Activated B cell treated with CpG ODN at 0.5 μM for 24 hours (primary cell): ENCODE measurements at regions of chr3 and their contacts with region 1.

Region 1: GRCh38 chr3:140941434-140942220 is at the start of gene SLC25A36:
- DNase-seq: peak; percentile 86
- ATAC-seq: peak; percentile 96
- H3K4me3 Mint-ChIP-seq: peak within 1 kb of the TSS; percentile 96
- H3K27ac Mint-ChIP-seq: peak within 1 kb of the TSS; percentile 96
- H3K4me1 Mint-ChIP-seq: peaks cover 37% of the 10 kb centered on the region
- H3K27me3 Mint-ChIP-seq: no peaks in the 10 kb centered on the region
- CTCF ChIP-seq: no peak
- total RNA-seq, gene SLC25A36: 40.4 and 45.7 TPM in 2 replicates

Region 2: GRCh38 chr3:139343895-139344856 is 1597.5 kb before region 1 on chr3 and contains the start of gene MRPS22:
- CTCF ChIA-PET with region 1: no interaction called
- POLR2A ChIA-PET with region 1: no interaction called
- intact Hi-C with region 1: loop called (anchors 5 kb)
- DNase-seq: peak; percentile 64
- ATAC-seq: peak; percentile 99
- H3K4me3 Mint-ChIP-seq: no peak within 1 kb of the TSS
- H3K27ac Mint-ChIP-seq: peak within 1 kb of the TSS; percentile 4
- H3K4me1 Mint-ChIP-seq: peaks cover 3% of the 10 kb centered on the region
- H3K27me3 Mint-ChIP-seq: peaks cover 16% of the 10 kb centered on the region
- CTCF ChIP-seq: no peak
- total RNA-seq, gene MRPS22: 37.0 and 44.7 TPM in 2 replicates

Region 3: DNA sequence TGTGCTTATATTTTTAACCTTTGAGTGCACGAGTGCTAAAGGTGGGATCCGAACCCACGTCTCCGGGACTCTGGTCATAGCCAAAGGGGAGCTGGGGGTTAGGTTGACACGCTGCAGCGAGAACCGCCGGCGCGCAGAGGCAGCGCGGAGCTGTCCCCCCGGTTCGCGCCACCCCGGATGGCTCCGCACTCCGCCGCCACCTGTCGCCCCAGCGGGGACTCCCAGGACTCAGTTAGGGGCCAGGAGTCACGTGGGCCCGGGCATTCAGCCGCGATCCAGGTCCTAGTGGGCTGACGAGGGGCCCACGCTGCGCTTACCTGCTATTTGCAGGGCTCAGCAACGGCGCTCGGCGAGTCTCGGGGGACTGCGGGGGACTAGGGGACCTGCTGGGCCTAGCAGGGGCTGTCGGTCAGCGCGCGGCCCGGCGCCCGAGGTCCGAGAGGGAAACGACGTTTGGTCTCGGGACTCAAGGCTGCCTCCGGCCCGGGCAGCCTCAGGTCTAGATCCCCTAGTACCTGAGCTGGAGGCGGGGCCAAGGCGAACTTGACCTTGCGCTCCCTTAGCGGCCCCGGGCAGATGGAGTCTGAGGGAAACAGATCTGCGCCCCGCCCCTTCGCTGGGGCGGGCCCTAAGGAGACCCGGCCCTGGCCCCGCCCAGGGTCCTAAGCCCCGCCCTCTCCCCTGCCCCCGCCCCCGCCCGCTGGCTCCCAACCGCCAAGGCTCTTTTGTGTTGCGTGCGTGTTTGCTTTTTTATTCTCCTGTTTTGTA is 1264.1 kb before region 1 on chr3 and contains the start of gene NMNAT3:
- CTCF ChIA-PET with region 1: no interaction called
- POLR2A ChIA-PET with region 1: no interaction called
- intact Hi-C with region 1: loop called (anchors 10 kb)
- DNase-seq: peak; percentile 69
- ATAC-seq: peak; percentile 100
- H3K4me3 Mint-ChIP-seq: peak within 1 kb of the TSS; percentile 82
- H3K27ac Mint-ChIP-seq: peak within 1 kb of the TSS; percentile 14
- H3K4me1 Mint-ChIP-seq: peaks cover 10% of the 10 kb centered on the region
- H3K27me3 Mint-ChIP-seq: peaks cover 6% of the 10 kb centered on the region
- CTCF ChIP-seq: no peak
- total RNA-seq, gene NMNAT3: 1.1 TPM in 2 replicates

Region 4: GRCh38 chr3:140922634-140923033 is 19.0 kb before region 1 on chr3:
- CTCF ChIA-PET with region 1: no interaction called
- POLR2A ChIA-PET with region 1: no interaction called
- intact Hi-C with region 1: no loop called
- DNase-seq: no peak
- ATAC-seq: peak; percentile 34
- H3K4me3 Mint-ChIP-seq: no peak overlapping the region
- H3K27ac Mint-ChIP-seq: no peak overlapping the region
- H3K4me1 Mint-ChIP-seq: no peaks in the 10 kb centered on the region
- H3K27me3 Mint-ChIP-seq: peaks cover 20% of the 10 kb centered on the region
- CTCF ChIP-seq: no peak

Region 5: DNA sequence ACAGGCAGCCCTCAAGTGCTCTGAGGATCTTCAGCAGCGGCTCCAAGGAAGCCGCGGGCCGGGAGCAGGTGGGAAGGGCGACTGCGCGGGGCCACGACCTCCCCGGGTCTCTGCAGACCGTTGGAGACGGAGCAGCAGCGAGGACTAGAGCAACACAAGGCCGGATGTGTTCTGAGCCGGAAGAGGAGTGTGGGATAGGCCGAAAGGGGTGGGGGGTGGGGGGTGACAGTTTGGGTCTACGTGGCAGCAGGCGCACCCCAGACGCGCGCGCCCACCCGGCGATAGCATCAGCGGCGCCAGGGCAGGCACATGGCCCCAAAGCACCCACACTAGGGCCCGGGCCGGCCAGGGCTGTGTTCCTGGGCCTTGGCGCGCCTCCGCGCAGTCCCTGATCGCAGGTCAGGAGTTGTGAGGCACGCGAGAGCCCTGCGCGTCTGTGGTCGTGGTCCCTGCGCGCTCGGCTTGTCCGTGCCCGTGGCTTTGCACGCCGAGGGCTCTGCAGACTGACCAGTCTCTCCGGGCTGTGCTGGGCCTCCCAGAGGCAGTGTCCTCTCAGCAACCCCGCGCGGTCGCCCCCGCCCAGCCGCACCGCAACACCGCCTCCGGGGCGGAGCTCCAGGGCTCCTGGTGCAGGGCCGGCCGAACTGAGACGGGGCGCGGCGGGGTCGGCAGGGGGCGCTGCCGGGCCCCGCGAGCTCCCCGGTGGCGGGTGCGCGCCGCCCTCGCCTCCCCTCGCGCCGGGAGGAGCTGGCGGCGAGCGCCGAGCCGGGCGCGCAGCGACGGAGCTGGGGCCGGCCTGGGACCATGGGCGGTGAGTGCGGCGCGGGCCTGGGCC is 289.7 kb after region 1 on chr3 and contains the start of gene PXYLP1:
- CTCF ChIA-PET with region 1: no interaction called
- POLR2A ChIA-PET with region 1: no interaction called
- intact Hi-C with region 1: loop called (anchors 1 kb)
- DNase-seq: peak; percentile 91
- ATAC-seq: peak; percentile 96
- H3K4me3 Mint-ChIP-seq: peak within 1 kb of the TSS; percentile 93
- H3K27ac Mint-ChIP-seq: peak within 1 kb of the TSS; percentile 94
- H3K4me1 Mint-ChIP-seq: peaks cover 16% of the 10 kb centered on the region
- H3K27me3 Mint-ChIP-seq: no peaks in the 10 kb centered on the region
- CTCF ChIP-seq: no peak
- total RNA-seq, gene PXYLP1: 2.3 and 2.7 TPM in 2 replicates

Region 6: DNA sequence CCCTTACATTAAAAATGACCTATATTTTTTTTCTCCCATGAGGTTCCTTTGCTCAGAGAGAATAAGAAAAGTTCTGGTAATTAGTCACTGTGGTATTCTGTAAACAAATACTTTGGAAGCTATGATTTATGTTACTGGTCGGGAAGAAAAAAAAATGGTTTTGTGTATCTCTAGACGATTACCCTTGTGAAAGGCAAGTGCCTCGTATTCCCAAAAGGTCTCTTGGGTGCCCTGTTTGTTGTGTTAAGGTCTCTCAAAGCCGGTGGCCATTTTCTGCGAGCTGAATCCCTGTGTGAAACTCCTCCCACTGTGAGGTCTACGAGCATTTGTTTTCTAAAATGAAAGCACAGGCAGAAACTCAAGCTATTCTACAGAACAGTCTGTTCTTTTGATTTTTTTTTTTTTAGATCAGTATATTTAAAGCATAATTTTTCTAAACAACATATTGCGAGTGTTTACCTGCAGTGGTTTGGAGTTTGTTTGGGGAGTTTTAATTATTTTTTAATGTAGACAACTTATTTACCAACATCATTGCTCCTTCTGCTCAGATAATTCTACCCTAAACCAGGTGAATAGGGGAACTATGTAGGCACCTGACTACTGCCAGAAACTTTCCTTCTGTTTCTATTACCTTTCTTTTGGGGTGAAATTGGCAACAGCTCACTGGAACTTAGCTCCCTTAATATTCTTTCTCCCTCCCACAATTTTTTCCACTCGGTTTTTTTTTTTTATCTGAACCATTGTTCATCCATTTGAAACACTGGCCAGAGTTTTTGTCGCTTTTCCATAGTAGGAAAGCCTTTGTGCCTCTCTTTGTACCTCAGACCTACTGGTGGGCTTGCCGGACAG is 470.7 kb after region 1 on chr3:
- CTCF ChIA-PET with region 1: no interaction called
- POLR2A ChIA-PET with region 1: interaction called, 10 read pairs
- intact Hi-C with region 1: no loop called
- DNase-seq: no peak
- ATAC-seq: peak; percentile 75
- H3K4me3 Mint-ChIP-seq: peak overlapping the region; percentile 86
- H3K27ac Mint-ChIP-seq: peak overlapping the region; percentile 97
- H3K4me1 Mint-ChIP-seq: peaks cover 44% of the 10 kb centered on the region
- H3K27me3 Mint-ChIP-seq: no peaks in the 10 kb centered on the region
- CTCF ChIP-seq: no peak

Region 7: GRCh38 chr3:142447852-142448823 is 1506.5 kb after region 1 on chr3 and contains the start of gene XRN1:
- CTCF ChIA-PET with region 1: no interaction called
- POLR2A ChIA-PET with region 1: no interaction called
- intact Hi-C with region 1: loop called (anchors 5 kb)
- DNase-seq: peak; percentile 96
- ATAC-seq: peak; percentile 97
- H3K4me3 Mint-ChIP-seq: peak within 1 kb of the TSS; percentile 97
- H3K27ac Mint-ChIP-seq: peak within 1 kb of the TSS; percentile 98
- H3K4me1 Mint-ChIP-seq: peaks cover 44% of the 10 kb centered on the region
- H3K27me3 Mint-ChIP-seq: no peaks in the 10 kb centered on the region
- CTCF ChIP-seq: no peak
- total RNA-seq, gene XRN1: 55.0 and 63.0 TPM in 2 replicates